ENCODE measurements at regions of chr17 and their contacts with region 1.

Region 1: GRCh38 chr17:61862975-61863800 is at the start of gene BRIP1:
- DNase-seq: peak; percentile 92
- H3K4me3 Mint-ChIP-seq: peak within 1 kb of the TSS; percentile 96
- H3K27ac Mint-ChIP-seq: peak within 1 kb of the TSS; percentile 90
- H3K4me1 Mint-ChIP-seq: peaks cover 40% of the 10 kb centered on the region
- H3K27me3 Mint-ChIP-seq: no peaks in the 10 kb centered on the region
- total RNA-seq, gene BRIP1: 20.1 to 21.7 TPM

Region 2: DNA sequence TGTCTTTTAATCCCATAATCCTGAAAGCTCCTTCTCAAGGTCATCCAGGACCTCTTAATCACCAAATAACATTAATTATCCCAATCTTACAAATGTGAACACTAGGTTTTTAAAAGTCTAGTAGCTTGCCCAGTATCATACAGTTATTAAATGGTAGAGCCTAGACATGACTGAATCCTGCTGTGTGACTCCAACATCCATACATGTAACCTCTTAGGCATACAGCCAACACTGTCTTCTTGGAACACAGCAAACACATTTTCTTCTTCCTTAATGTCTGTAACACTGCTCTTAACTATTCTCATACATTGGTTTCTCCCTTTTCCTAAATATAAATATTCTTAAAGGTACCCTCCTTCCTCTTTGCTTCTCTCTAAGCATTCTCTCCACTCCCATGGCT is 13.5 kb before region 1 on chr17:
- CTCF ChIA-PET with region 1: no interaction called
- POLR2A ChIA-PET with region 1: interaction called, 10 read pairs
- DNase-seq: no peak
- H3K4me3 Mint-ChIP-seq: no peak overlapping the region
- H3K27ac Mint-ChIP-seq: no peak overlapping the region
- H3K4me1 Mint-ChIP-seq: peaks cover 5% of the 10 kb centered on the region
- H3K27me3 Mint-ChIP-seq: no peaks in the 10 kb centered on the region

Region 3: DNA sequence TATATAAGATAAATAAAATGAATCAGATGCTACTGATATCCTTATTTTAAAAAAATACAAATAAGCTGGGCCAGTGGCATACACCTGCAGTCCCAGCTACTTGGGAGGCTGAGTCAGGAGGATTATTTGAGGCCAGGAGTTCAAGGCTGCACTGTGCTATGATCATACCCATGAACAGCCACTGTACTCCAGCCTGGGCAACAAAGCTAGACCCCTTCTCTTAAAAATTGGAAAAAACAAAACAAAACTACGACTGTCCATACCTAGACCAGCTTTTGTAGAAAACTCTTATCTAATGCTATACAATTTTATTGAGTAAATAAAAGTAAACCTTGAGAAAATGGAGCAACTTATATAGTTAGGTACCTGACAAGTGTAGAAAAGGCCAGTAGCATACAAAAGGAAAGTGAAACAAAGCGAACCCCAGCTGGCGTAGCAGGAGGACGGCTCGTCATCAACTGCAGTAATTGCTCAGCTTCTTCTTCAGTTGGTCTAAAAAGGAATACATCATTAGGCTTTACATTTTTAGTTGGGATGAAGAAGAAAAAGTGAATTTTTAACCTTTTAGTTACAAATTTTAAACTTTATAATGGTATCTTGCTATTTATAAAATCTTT is 41.0 kb after region 1 on chr17:
- CTCF ChIA-PET with region 1: no interaction called
- POLR2A ChIA-PET with region 1: interaction called, 30 read pairs
- DNase-seq: peak; percentile 63
- H3K4me3 Mint-ChIP-seq: peak overlapping the region; percentile 70
- H3K27ac Mint-ChIP-seq: peak overlapping the region; percentile 85
- H3K4me1 Mint-ChIP-seq: peaks cover 6% of the 10 kb centered on the region
- H3K27me3 Mint-ChIP-seq: no peaks in the 10 kb centered on the region

Region 4: DNA sequence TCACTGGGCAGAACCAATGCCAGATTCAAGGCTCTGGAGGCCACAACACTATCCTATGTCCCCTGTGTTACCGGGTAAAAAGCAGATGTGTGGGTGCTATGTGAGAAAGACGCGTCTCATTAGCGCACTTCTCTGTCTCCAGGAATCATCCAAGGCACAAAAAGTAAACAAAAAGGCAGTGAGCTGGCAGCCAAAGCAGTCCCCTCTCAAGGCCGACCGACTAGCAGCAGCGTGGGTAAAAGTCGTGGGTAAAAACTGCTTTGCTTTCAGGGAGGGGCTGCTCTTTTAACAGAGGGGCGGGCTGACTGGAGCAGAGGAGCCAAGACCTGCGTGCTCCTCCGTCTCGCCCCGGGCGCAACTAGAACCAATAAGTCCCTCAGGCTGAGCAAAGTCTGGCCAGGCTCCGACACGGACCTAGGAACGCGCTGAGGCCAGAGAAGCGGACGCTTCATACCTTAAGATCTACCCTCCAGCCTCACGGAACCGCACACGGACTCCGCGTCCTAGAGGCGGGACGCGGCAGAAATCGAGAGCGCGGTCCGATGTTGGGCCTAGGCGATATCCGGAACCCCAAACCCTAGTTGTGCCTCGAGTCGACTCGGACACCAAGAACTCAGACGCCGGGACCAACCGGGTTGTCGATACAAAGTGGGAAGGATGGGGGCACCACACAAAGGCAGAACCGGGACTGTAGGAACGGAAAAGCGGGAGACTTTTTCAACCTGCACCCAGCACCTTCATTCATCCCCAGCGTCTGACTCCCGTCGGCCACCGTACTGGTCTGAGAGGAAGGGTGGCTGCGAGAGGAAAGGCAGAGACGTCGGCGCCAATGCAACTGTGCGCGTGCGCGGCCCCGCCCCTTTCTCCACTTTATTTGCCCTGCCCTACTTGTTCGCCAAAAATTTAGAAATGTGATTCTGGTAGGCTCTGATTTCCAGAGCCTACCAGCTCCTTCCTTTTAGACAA is 64.3 kb after region 1 on chr17 and contains the start of gene INTS2:
- CTCF ChIA-PET with region 1: no interaction called
- POLR2A ChIA-PET with region 1: interaction called, 13 read pairs
- DNase-seq: peak; percentile 96
- H3K4me3 Mint-ChIP-seq: peak within 1 kb of the TSS; percentile 83
- H3K27ac Mint-ChIP-seq: peak within 1 kb of the TSS; percentile 84
- H3K4me1 Mint-ChIP-seq: peaks cover 18% of the 10 kb centered on the region
- H3K27me3 Mint-ChIP-seq: peaks cover 3% of the 10 kb centered on the region
- total RNA-seq, gene INTS2: 24.3 to 25.0 TPM

Region 5: GRCh38 chr17:62065598-62066468 is 202.6 kb after region 1 on chr17:
- CTCF ChIA-PET with region 1: interaction called, 9 read pairs
- POLR2A ChIA-PET with region 1: interaction called, 55 read pairs
- DNase-seq: peak; percentile 99
- H3K4me3 Mint-ChIP-seq: peak overlapping the region; percentile 91
- H3K27ac Mint-ChIP-seq: peak overlapping the region; percentile 96
- H3K4me1 Mint-ChIP-seq: peaks cover 35% of the 10 kb centered on the region
- H3K27me3 Mint-ChIP-seq: no peaks in the 10 kb centered on the region

Region 6: DNA sequence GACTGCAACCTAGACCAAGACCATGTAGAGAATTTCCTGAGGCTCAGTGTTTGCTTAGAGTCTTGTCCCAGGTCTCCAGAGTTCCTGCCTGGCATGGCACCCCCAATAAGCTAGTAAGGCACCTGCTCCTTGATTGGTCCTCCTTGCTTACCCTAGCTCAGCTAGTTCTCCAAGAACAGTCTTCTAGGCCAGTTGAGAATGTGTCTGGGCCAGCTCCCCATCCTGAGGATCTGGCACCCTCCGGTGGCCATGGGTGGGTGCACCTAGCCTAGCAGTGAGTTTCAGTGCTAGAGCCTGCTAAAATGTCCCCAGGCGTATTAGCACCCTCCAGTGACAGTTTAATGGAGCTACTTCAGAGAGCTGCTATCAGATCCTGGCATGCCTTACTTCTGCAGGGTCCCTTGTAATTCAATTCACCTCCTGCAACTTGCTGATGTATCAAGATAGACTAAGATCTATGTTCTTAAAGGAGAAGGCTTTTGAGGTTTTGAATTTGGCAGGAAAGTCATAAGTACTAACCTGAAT is 246.3 kb after region 1 on chr17:
- CTCF ChIA-PET with region 1: interaction called, 17 read pairs
- POLR2A ChIA-PET with region 1: interaction called, 4 read pairs
- DNase-seq: peak; percentile 76
- H3K4me3 Mint-ChIP-seq: no peak overlapping the region
- H3K27ac Mint-ChIP-seq: no peak overlapping the region
- H3K4me1 Mint-ChIP-seq: peaks cover 3% of the 10 kb centered on the region
- H3K27me3 Mint-ChIP-seq: peaks cover 3% of the 10 kb centered on the region